Activated naive CD4-positive, alpha-beta T cell treated with anti-CD3 and anti-CD28 coated beads for 36 hours (primary cell): ENCODE measurements at regions of chr1 and their contacts with region 1.

Region 1: GRCh38 chr1:25616095-25616986 is at the start of gene MAN1C1:
- DNase-seq: peak; percentile 72
- H3K4me3 Mint-ChIP-seq: peak within 1 kb of the TSS; percentile 88
- H3K27ac Mint-ChIP-seq: no peak within 1 kb of the TSS
- H3K4me1 Mint-ChIP-seq: peaks cover 52% of the 10 kb centered on the region
- H3K27me3 Mint-ChIP-seq: peaks cover 1% of the 10 kb centered on the region
- total RNA-seq, gene MAN1C1: 4.9 to 6.3 TPM

Region 2: DNA sequence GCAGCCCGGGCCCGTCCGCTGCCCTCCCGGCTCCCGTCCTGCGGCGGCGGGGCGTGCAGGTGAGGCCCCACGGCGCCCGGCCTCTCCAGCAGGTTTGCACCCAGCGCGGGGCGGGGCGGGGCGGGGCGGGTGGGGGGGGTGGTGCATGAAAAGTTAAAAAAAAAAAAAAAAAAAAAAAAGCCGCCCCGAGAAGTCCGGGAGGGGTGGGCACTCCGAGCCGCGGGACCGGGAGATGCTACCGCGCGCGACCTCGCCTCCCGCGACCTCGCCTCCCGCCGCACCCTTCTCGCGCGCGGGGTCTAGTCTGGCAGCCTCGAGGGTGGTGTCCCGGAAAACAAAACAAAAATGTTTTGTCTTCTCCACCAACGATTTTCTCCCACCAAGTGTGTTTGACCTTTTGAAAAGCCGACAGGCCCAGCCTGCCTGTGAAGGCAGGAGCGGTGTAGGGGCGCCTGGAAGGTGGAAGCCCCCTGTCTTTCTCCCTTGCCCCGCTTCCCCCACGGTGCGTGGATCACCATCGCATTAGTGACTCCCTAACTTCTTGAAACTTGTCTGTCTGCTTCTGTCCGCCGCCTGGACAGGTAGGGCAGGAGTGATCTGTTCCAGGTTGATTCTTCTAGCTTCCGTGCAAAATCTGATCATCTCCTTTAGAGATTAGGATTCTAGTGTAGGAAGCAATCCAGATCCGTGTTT is 1113.1 kb before region 1 on chr1:
- CTCF ChIA-PET with region 1: no interaction called
- intact Hi-C with region 1: no loop called
- DNase-seq: no peak
- H3K4me3 Mint-ChIP-seq: peak overlapping the region; percentile 100
- H3K27ac Mint-ChIP-seq: peak overlapping the region; percentile 93
- H3K4me1 Mint-ChIP-seq: peaks cover 54% of the 10 kb centered on the region
- H3K27me3 Mint-ChIP-seq: no peaks in the 10 kb centered on the region

Region 3: GRCh38 chr1:24830680-24831272 is 785.6 kb before region 1 on chr1:
- CTCF ChIA-PET with region 1: no interaction called
- intact Hi-C with region 1: no loop called
- DNase-seq: no peak
- H3K4me3 Mint-ChIP-seq: no peak overlapping the region
- H3K27ac Mint-ChIP-seq: no peak overlapping the region
- H3K4me1 Mint-ChIP-seq: no peaks in the 10 kb centered on the region
- H3K27me3 Mint-ChIP-seq: no peaks in the 10 kb centered on the region

Region 4: GRCh38 chr1:25487628-25488027 is 128.7 kb before region 1 on chr1:
- CTCF ChIA-PET with region 1: no interaction called
- intact Hi-C with region 1: no loop called
- DNase-seq: peak; percentile 51
- H3K4me3 Mint-ChIP-seq: no peak overlapping the region
- H3K27ac Mint-ChIP-seq: peak overlapping the region; percentile 5
- H3K4me1 Mint-ChIP-seq: peaks cover 5% of the 10 kb centered on the region
- H3K27me3 Mint-ChIP-seq: no peaks in the 10 kb centered on the region

Region 5: DNA sequence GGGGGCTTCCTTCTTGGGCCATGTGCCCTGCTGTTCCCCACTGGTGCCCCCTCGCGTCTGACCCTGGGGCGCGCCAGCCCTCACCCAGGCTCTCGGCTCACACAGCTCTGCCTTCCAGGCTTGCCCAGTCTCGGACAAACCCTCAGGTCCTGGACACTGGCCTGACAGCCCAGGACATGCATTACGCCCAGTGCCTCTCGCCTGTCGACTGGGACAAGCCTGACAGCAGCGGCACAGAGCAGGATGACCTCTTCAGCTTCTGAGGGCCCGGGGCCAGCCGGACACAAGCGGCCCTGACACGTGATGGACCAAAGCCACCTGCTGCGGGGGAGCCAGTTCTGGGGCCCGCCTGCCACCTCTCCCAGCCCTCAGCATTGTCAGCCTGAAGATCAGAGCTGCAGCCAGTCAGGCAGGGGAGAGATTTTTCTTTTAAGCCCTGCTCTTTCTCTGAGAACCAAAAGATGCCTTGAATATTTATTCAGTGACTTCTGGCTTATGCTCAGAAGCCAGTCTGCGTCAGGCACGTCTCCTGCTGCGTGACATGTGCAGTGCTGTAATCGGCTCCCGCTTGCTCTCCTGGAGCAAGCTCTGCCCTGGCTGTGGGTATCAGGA is 49.5 kb before region 1 on chr1:
- CTCF ChIA-PET with region 1: interaction called, 7 read pairs
- intact Hi-C with region 1: loop called (anchors 2 kb)
- DNase-seq: peak; percentile 54
- H3K4me3 Mint-ChIP-seq: no peak overlapping the region
- H3K27ac Mint-ChIP-seq: peak overlapping the region; percentile 83
- H3K4me1 Mint-ChIP-seq: peaks cover 81% of the 10 kb centered on the region
- H3K27me3 Mint-ChIP-seq: no peaks in the 10 kb centered on the region

Region 6: GRCh38 chr1:25642574-25643108 is 26.3 kb after region 1 on chr1:
- CTCF ChIA-PET with region 1: interaction called, 24 read pairs
- intact Hi-C with region 1: no loop called
- DNase-seq: peak; percentile 86
- H3K4me3 Mint-ChIP-seq: peak overlapping the region; percentile 68
- H3K27ac Mint-ChIP-seq: peak overlapping the region; percentile 77
- H3K4me1 Mint-ChIP-seq: peaks cover 76% of the 10 kb centered on the region
- H3K27me3 Mint-ChIP-seq: no peaks in the 10 kb centered on the region

Region 7: GRCh38 chr1:25675729-25676476 is 59.6 kb after region 1 on chr1:
- CTCF ChIA-PET with region 1: interaction called, 18 read pairs
- intact Hi-C with region 1: loop called (anchors 1 kb)
- DNase-seq: peak; percentile 97
- H3K4me3 Mint-ChIP-seq: peak overlapping the region; percentile 68
- H3K27ac Mint-ChIP-seq: peak overlapping the region; percentile 79
- H3K4me1 Mint-ChIP-seq: peaks cover 85% of the 10 kb centered on the region
- H3K27me3 Mint-ChIP-seq: no peaks in the 10 kb centered on the region

Region 8: GRCh38 chr1:25774921-25775801 is 158.8 kb after region 1 on chr1:
- CTCF ChIA-PET with region 1: interaction called, 16 read pairs
- intact Hi-C with region 1: loop called (anchors 1 kb)
- DNase-seq: peak; percentile 97
- H3K4me3 Mint-ChIP-seq: peak overlapping the region; percentile 65
- H3K27ac Mint-ChIP-seq: peak overlapping the region; percentile 84
- H3K4me1 Mint-ChIP-seq: peaks cover 70% of the 10 kb centered on the region
- H3K27me3 Mint-ChIP-seq: no peaks in the 10 kb centered on the region

Region 9: GRCh38 chr1:25810341-25811299 is 194.3 kb after region 1 on chr1:
- CTCF ChIA-PET with region 1: interaction called, 12 read pairs
- intact Hi-C with region 1: no loop called
- DNase-seq: peak; percentile 87
- H3K4me3 Mint-ChIP-seq: no peak overlapping the region
- H3K27ac Mint-ChIP-seq: no peak overlapping the region
- H3K4me1 Mint-ChIP-seq: peaks cover 5% of the 10 kb centered on the region
- H3K27me3 Mint-ChIP-seq: no peaks in the 10 kb centered on the region